OCI-LY7 (cell line): ENCODE measurements at regions of chr12 and their contacts with region 1.

Region 1: GRCh38 chr12:49366652-49367380 is 446 bp upstream of the SPATS2 start:
- DNase-seq: peak; percentile 95
- H3K4me3 ChIP-seq: peak overlapping the region; percentile 91
- H3K27ac ChIP-seq: peak overlapping the region; percentile 88
- H3K4me1 ChIP-seq: peaks cover 34% of the 10 kb centered on the region
- CTCF ChIP-seq: peak; percentile 19; the same call in 1 of the 2 replicates

Region 2: DNA sequence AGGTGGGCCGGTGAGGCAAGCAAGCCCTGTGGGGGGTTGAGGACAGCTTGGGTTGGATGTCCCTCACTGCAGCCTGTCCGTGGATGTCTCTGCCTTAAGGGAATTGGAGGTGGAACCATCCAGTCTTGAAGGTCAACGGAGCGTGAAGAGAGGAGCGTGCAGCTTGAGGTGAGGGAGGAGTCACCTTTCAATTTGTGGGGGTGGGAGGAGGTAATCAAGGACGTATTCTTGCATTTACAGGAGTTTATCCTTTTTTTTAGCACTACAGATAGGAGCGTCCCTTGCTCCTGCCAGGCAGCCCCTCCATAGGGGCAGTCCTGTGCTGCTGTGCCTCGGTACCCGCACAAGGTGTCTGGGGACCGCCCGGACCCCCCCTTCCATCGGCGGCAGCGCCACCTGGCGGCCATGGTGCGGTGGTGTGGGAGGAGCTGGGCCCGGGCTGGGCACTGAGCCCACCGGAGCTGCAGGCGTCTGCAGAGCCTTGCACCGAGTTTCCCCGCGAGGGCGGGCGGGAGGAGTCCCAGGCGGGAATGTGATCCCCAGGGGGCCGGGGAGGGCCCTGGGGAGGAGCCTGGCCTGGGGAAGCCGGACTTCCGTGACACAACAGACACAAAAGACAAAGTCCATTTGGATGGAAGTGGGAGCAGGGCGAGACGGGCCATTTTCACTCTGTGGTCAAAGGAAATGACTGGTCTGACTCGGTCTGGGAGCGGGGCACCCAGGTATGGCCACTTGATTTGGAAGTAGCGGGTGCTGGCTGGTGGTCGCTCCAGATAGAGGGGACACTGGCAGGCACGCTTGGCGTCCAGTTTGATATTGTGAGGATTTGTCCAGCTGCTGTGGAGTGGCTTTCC is 19.2 kb before region 1 on chr12:
- CTCF ChIA-PET with region 1: interaction called, 10 read pairs
- POLR2A ChIA-PET with region 1: interaction called, 6 read pairs
- intact Hi-C with region 1: no loop called
- DNase-seq: peak; percentile 77
- H3K4me3 ChIP-seq: peak overlapping the region; percentile 63
- H3K27ac ChIP-seq: no peak overlapping the region
- H3K4me1 ChIP-seq: peaks cover 54% of the 10 kb centered on the region
- CTCF ChIP-seq: peak; percentile 98

Region 3: GRCh38 chr12:49413796-49414195 is 47.0 kb after region 1 on chr12:
- CTCF ChIA-PET with region 1: no interaction called
- POLR2A ChIA-PET with region 1: no interaction called
- intact Hi-C with region 1: no loop called
- DNase-seq: no peak
- H3K4me3 ChIP-seq: no peak overlapping the region
- H3K27ac ChIP-seq: no peak overlapping the region
- H3K4me1 ChIP-seq: no peaks in the 10 kb centered on the region
- CTCF ChIP-seq: no peak

Region 4: GRCh38 chr12:49567611-49568441 is 201.0 kb after region 1 on chr12 and contains the start of gene MCRS1:
- CTCF ChIA-PET with region 1: no interaction called
- POLR2A ChIA-PET with region 1: interaction called, 4 read pairs
- intact Hi-C with region 1: loop called (anchors 2 kb)
- DNase-seq: peak; percentile 97
- H3K4me3 ChIP-seq: peak within 1 kb of the TSS; percentile 94
- H3K27ac ChIP-seq: peak within 1 kb of the TSS; percentile 54
- H3K4me1 ChIP-seq: peaks cover 19% of the 10 kb centered on the region
- CTCF ChIP-seq: no peak
- total RNA-seq, gene MCRS1: 72.0 and 75.6 TPM in 2 replicates